Heart right ventricle (tissue), 16 donors: ENCODE measurements at regions of chrX and their contacts with region 1.

Region 1: DNA sequence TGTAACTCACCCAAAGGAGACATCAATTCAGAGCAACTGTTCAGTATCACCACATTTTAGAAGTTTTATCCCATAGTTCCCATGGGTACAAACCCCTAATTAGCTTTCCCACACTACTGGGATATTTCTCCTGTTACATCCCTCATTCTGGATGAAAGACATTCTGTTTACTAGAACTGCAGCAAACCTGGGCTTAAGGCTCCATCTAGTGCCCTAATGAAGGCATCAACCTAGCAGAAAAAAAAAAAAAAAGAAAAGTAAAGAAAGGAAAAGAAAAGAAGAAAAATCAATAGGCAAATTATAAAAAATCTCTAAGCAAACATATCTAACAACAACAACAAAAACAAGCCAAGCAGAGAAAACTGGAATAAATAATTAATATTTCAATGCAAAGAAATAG is 133.7 kb upstream of the CPXCR1 start:
- DNase-seq: no peak
- ATAC-seq: peak in 1 of 8 donors; percentile 55
- H3K4me3 ChIP-seq: no peak overlapping the region
- H3K27ac ChIP-seq: no peak overlapping the region
- H3K4me1 ChIP-seq: no peaks in the 10 kb centered on the region
- H3K27me3 ChIP-seq: no peaks in the 10 kb centered on the region
- CTCF ChIP-seq: peak in 5 of 9 donors; percentile 31 to 53 (median 44)

Region 2: DNA sequence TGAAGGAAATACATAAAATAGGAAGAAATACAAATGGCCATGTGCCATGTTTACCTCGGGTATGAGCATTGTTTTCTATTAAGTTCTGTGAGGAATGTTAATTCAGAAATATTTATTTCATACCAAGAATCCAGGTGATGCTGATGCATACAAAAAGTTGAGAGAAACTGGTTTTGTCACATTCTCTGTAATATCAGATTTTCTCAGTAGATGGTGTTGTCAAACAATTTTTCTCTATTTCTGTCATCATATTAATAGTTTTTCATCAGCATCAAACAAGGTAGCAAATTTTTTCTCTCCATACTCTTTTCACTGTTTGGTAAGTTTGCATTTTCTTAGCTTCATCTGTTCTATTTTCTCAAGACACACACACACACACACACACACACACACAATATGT is 915.9 kb before region 1 on chrX:
- intact Hi-C with region 1: loop called in 1 of 10 experiments (anchors 10 kb)
- DNase-seq: no peak
- ATAC-seq: no peak
- H3K4me3 ChIP-seq: no peak overlapping the region
- H3K27ac ChIP-seq: no peak overlapping the region
- H3K4me1 ChIP-seq: no peaks in the 10 kb centered on the region
- H3K27me3 ChIP-seq: peaks cover 0 to 9% (median 0%) of the 10 kb centered on the region in 7 donors
- CTCF ChIP-seq: peak in 3 of 9 donors; percentile 12 to 24 (median 18)